HCT116 (cell line): ENCODE measurements at regions of chr12 and their contacts with region 1.

Region 1: GRCh38 chr12:89345830-89346740 is 6.2 kb downstream of the DUSP6 start:
- DNase-seq: peak; percentile 61
- ATAC-seq: peak; percentile 59
- H3K4me3 ChIP-seq: no peak overlapping the region
- H3K27ac ChIP-seq: peak overlapping the region; percentile 43
- H3K4me1 ChIP-seq: peaks cover 40 to 53% of the 10 kb centered on the region in 2 experiments
- H3K27me3 ChIP-seq: no peaks in the 10 kb centered on the region
- CTCF ChIP-seq: no peak
- POLR2A ChIP-seq: no peak
- RAD21 ChIP-seq: no peak

Region 2: GRCh38 chr12:89051065-89051677 is 294.9 kb before region 1 on chr12:
- CTCF ChIA-PET with region 1: no interaction called
- POLR2A ChIA-PET with region 1: no interaction called
- RAD21 ChIA-PET with region 1: no interaction called
- intact Hi-C with region 1: loop called (anchors 2 kb)
- DNase-seq: peak; percentile 70
- ATAC-seq: peak; percentile 85
- H3K4me3 ChIP-seq: no peak overlapping the region
- H3K27ac ChIP-seq: no peak overlapping the region
- H3K4me1 ChIP-seq: no peaks in the 10 kb centered on the region
- H3K27me3 ChIP-seq: no peaks in the 10 kb centered on the region
- CTCF ChIP-seq: peak; percentile 86 to 95 (median 92)
- POLR2A ChIP-seq: no peak
- RAD21 ChIP-seq: peak; percentile 97

Region 3: GRCh38 chr12:89156862-89157262 is 189.2 kb before region 1 on chr12:
- CTCF ChIA-PET with region 1: no interaction called
- POLR2A ChIA-PET with region 1: no interaction called
- RAD21 ChIA-PET with region 1: no interaction called
- intact Hi-C with region 1: loop called (anchors 10 kb)
- DNase-seq: no peak
- ATAC-seq: no peak
- H3K4me3 ChIP-seq: no peak overlapping the region
- H3K27ac ChIP-seq: no peak overlapping the region
- H3K4me1 ChIP-seq: peaks cover 0 to 4% of the 10 kb centered on the region in 2 experiments; a peak in 1 of 4 replicates
- H3K27me3 ChIP-seq: no peaks in the 10 kb centered on the region
- CTCF ChIP-seq: no peak
- POLR2A ChIP-seq: no peak
- RAD21 ChIP-seq: no peak

Region 4: DNA sequence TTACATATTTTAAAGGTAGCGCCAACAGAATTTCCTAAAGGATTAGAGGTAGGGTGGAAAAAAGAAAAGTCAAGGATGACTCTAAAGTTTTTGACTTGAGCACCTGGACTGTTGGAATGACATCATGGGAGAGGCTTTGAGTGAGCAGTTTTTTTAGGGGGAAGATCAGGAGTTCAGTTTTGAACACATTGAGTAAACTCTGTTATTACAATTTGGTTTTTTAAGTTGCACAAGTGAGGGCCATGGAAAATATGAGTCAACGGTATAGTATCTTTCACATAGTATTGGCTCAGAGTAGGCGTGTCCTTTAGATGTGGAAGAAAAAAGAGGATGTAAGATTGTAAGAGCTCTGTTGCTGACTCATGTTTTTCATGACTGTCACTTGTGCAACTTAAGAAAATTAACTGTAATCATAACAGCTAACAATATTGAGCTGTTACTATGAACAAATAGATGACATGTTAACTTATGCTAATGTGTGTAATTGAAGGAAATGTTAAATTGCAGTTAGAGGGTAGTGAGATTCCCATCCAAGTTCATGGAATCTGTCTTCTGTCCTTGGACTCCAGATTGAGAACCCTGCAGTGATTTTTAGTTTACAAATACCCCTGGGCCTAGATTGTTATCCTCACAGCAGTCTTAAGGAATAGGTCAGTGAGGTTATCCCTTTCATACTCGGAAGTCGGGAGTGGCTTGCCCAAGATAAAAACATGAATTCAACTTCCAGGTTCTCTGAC is 410.7 kb after region 1 on chr12:
- CTCF ChIA-PET with region 1: no interaction called
- POLR2A ChIA-PET with region 1: no interaction called
- RAD21 ChIA-PET with region 1: no interaction called
- intact Hi-C with region 1: no loop called
- DNase-seq: peak; percentile 89
- ATAC-seq: peak; percentile 83
- H3K4me3 ChIP-seq: no peak overlapping the region
- H3K27ac ChIP-seq: no peak overlapping the region
- H3K4me1 ChIP-seq: peaks cover 3 to 18% of the 10 kb centered on the region in 2 experiments; a peak in 2 of 4 replicates
- H3K27me3 ChIP-seq: no peaks in the 10 kb centered on the region
- CTCF ChIP-seq: no peak
- POLR2A ChIP-seq: no peak
- RAD21 ChIP-seq: 0 out of 2 replicates have a peak, but pooled peaks have one; percentile 16